MCF 10A (cell line): ENCODE measurements at regions of chr4 and their contacts with region 1.

Region 1: GRCh38 chr4:106369456-106370060 is 980 bp upstream of the GIMD1 start:
- DNase-seq: peak; percentile 70
- H3K4me3 Mint-ChIP-seq: no peak overlapping the region
- H3K27ac Mint-ChIP-seq: no peak overlapping the region
- H3K4me1 Mint-ChIP-seq: peaks cover 12% of the 10 kb centered on the region
- H3K27me3 Mint-ChIP-seq: no peaks in the 10 kb centered on the region
- CTCF ChIP-seq: peak; percentile 74

Region 2: GRCh38 chr4:106380179-106380578 is 10.6 kb after region 1 on chr4:
- CTCF ChIA-PET with region 1: interaction called, 22 read pairs
- POLR2A ChIA-PET with region 1: no interaction called
- intact Hi-C with region 1: no loop called
- DNase-seq: no peak
- H3K4me3 Mint-ChIP-seq: no peak overlapping the region
- H3K27ac Mint-ChIP-seq: no peak overlapping the region
- H3K4me1 Mint-ChIP-seq: no peaks in the 10 kb centered on the region
- H3K27me3 Mint-ChIP-seq: no peaks in the 10 kb centered on the region
- CTCF ChIP-seq: no peak

Region 3: DNA sequence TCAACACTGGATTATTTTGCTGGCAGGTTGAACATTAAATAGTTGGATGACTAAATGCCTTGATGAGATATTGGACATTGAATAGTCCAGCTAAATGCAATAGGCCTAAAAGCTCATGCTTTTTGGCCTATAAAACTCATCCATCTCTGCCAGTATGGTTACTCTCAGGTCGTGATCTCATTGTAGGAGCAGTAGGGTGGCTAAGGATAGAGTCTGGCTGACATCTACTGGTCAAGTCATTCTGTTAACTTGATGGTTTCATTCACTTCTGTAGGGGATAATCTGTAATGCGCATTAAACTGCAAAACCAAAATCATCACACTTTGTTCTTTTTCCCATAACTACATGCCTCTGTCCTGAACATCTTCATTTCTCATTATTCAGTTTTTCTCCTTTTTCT is 439.5 kb after region 1 on chr4:
- CTCF ChIA-PET with region 1: interaction called, 95 read pairs
- POLR2A ChIA-PET with region 1: interaction called, 3 read pairs
- intact Hi-C with region 1: loop called (anchors 1 kb)
- DNase-seq: peak; percentile 63
- H3K4me3 Mint-ChIP-seq: no peak overlapping the region
- H3K27ac Mint-ChIP-seq: no peak overlapping the region
- H3K4me1 Mint-ChIP-seq: no peaks in the 10 kb centered on the region
- H3K27me3 Mint-ChIP-seq: no peaks in the 10 kb centered on the region
- CTCF ChIP-seq: peak; percentile 80

Region 4: DNA sequence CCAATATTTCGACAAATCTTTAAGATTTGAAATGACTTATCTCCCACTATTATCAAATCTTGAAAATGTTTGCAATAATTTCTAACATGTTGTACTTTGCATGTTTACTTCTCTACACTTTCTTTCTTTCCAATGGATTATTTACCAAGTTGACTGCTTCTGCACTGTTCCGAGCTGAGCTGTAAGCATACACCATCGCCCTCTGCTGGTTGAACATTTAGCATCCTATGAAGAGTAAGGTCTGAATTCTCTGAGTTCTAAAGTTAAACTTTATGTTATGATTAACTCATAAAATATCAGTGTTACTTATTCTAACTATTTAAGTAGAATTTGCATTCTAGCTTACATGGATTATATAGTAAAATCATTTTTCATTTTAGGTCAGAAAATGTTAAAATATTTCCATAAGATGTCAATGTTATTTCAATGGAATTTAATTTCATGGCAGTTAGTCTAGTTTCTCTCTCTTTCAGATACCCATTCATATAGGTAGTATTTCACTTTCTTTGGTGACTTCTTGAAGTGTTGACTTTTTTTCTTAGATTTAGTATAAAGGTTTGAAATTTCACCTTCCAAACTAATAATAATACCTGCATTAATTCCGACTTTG is 529.2 kb after region 1 on chr4:
- CTCF ChIA-PET with region 1: interaction called, 23 read pairs
- POLR2A ChIA-PET with region 1: no interaction called
- intact Hi-C with region 1: loop called (anchors 1 kb)
- DNase-seq: peak; percentile 71
- H3K4me3 Mint-ChIP-seq: no peak overlapping the region
- H3K27ac Mint-ChIP-seq: no peak overlapping the region
- H3K4me1 Mint-ChIP-seq: no peaks in the 10 kb centered on the region
- H3K27me3 Mint-ChIP-seq: no peaks in the 10 kb centered on the region
- CTCF ChIP-seq: peak; percentile 72

Region 5: GRCh38 chr4:107147873-107148272 is 778.3 kb after region 1 on chr4:
- CTCF ChIA-PET with region 1: no interaction called
- POLR2A ChIA-PET with region 1: no interaction called
- intact Hi-C with region 1: no loop called
- DNase-seq: no peak
- H3K4me3 Mint-ChIP-seq: no peak overlapping the region
- H3K27ac Mint-ChIP-seq: no peak overlapping the region
- H3K4me1 Mint-ChIP-seq: no peaks in the 10 kb centered on the region
- H3K27me3 Mint-ChIP-seq: no peaks in the 10 kb centered on the region
- CTCF ChIP-seq: no peak